Heart left ventricle (tissue), 16 donors: ENCODE measurements at regions of chr2 and their contacts with region 1.

Region 1: GRCh38 chr2:18520451-18521425 is 39.7 kb downstream of the RDH14 start:
- DNase-seq: peak; percentile 80 to 90 (median 82)
- ATAC-seq: peak; percentile 82 to 89 (median 85)
- H3K4me3 ChIP-seq: peak overlapping the region in 7 of 12 donors; percentile 6 to 39 (median 31)
- H3K27ac ChIP-seq: peak overlapping the region; percentile 25 to 79 (median 62)
- H3K4me1 ChIP-seq: peaks cover 0 to 36% (median 15%) of the 10 kb centered on the region in 12 donors
- H3K27me3 ChIP-seq: no peaks in the 10 kb centered on the region
- CTCF ChIP-seq: peak; percentile 75 to 97 (median 92)
- POLR2A ChIP-seq: no peak

Region 2: GRCh38 chr2:18387441-18388206 is 133.1 kb before region 1 on chr2:
- intact Hi-C with region 1: loop called in 1 of 10 experiments (anchors 5 kb)
- DNase-seq: peak in 4 of 5 donors; percentile 64 to 74 (median 66)
- ATAC-seq: peak; percentile 72 to 95 (median 90)
- H3K4me3 ChIP-seq: no peak overlapping the region
- H3K27ac ChIP-seq: peak overlapping the region in 3 of 12 donors; percentile 12 to 47 (median 45)
- H3K4me1 ChIP-seq: peaks cover 0 to 2% (median 0%) of the 10 kb centered on the region in 12 donors
- H3K27me3 ChIP-seq: no peaks in the 10 kb centered on the region
- CTCF ChIP-seq: peak; percentile 89 to 96 (median 94)
- POLR2A ChIP-seq: no peak

Region 3: GRCh38 chr2:18536100-18536499 is 15.4 kb after region 1 on chr2:
- intact Hi-C with region 1: no loop called
- DNase-seq: no peak
- ATAC-seq: no peak
- H3K4me3 ChIP-seq: no peak overlapping the region
- H3K27ac ChIP-seq: no peak overlapping the region
- H3K4me1 ChIP-seq: no peaks in the 10 kb centered on the region
- H3K27me3 ChIP-seq: no peaks in the 10 kb centered on the region
- CTCF ChIP-seq: no peak
- POLR2A ChIP-seq: no peak

Region 4: DNA sequence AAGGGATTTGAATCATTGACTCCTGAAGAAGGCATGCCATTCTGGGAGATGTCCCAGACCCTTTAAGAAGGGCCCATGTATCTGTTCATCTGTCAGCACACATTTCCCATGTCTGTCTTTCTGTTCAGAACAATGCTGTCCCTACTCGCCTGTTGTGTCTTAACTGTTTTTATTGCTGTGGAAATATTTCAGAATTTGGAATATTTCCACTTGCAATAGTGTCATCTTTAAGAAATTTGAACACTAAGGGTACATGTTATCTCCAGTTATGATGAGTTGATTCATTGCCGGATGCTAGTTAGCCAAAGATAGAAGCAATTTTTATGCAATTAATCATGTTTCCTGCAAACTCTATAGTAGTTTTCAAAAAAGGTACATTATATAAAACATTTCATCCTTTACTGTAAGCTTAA is 105.5 kb after region 1 on chr2:
- intact Hi-C with region 1: loop called in 1 of 10 experiments (anchors 10 kb)
- DNase-seq: no peak
- ATAC-seq: peak; percentile 37 to 67 (median 50)
- H3K4me3 ChIP-seq: no peak overlapping the region
- H3K27ac ChIP-seq: peak overlapping the region in 4 of 12 donors; percentile 11 to 55 (median 16)
- H3K4me1 ChIP-seq: peaks cover 0 to 15% (median under 1%) of the 10 kb centered on the region in 12 donors
- H3K27me3 ChIP-seq: no peaks in the 10 kb centered on the region
- CTCF ChIP-seq: no peak
- POLR2A ChIP-seq: no peak

Region 5: GRCh38 chr2:18834341-18834740 is 313.6 kb after region 1 on chr2:
- intact Hi-C with region 1: loop called in 1 of 10 experiments (anchors 10 kb)
- DNase-seq: no peak
- ATAC-seq: peak in 2 of 4 donors; percentile 74 to 83
- H3K4me3 ChIP-seq: no peak overlapping the region
- H3K27ac ChIP-seq: peak overlapping the region in 1 of 12 donors; percentile 33
- H3K4me1 ChIP-seq: peaks cover 0 to 48% (median 23%) of the 10 kb centered on the region in 12 donors
- H3K27me3 ChIP-seq: no peaks in the 10 kb centered on the region
- CTCF ChIP-seq: no peak
- POLR2A ChIP-seq: no peak

Region 6: GRCh38 chr2:19868705-19869580 is 1348.2 kb after region 1 on chr2:
- intact Hi-C with region 1: loop called in 7 of 10 experiments (anchors 5 kb)
- DNase-seq: peak; percentile 44 to 75 (median 55)
- ATAC-seq: peak in 3 of 4 donors; percentile 68 to 83 (median 78)
- H3K4me3 ChIP-seq: peak overlapping the region; percentile 6 to 63 (median 50)
- H3K27ac ChIP-seq: no peak overlapping the region
- H3K4me1 ChIP-seq: peaks cover 0 to 10% (median 4%) of the 10 kb centered on the region in 12 donors
- H3K27me3 ChIP-seq: no peaks in the 10 kb centered on the region
- CTCF ChIP-seq: no peak
- POLR2A ChIP-seq: no peak